Ascending aorta (tissue), 2 donors: ENCODE measurements at regions of chr10 and their contacts with region 1.

Region 1: GRCh38 chr10:127919418-127920271 is 12.7 kb downstream of the PTPRE start:
- DNase-seq: peak in 1 of 2 donors; percentile 68
- H3K4me3 ChIP-seq: no peak overlapping the region
- H3K27ac ChIP-seq: peak overlapping the region; percentile 90 to 92
- H3K4me1 ChIP-seq: peaks cover 6 to 37% of the 10 kb centered on the region in 2 donors
- H3K27me3 ChIP-seq: no peaks in the 10 kb centered on the region
- CTCF ChIP-seq: peak; percentile 3 to 35 (median 26)

Region 2: DNA sequence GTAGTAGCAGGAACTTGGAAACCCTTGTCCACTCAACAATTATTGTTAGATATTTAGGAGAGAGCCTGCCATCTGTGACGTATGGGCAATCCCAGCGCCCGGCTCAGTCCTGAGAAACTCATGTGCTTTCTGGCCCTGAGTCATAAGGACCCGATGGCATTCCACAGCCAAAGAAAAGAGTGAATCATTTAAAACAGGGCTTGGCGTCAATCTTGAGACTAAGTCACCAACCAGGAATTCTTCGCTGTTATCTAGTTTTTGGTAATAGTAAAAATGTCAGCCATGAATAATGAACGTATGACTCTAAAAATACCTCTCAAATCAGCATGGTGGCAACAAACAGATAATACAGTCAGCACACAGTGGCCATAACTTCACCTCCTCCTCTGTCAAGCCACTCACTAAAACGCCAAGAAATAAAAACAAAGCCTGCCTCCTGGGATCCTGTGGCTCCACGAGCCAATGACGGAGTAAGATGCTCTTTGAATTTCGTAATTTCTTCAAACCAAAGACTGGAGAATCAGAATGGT is 1672.1 kb before region 1 on chr10:
- intact Hi-C with region 1: loop called (anchors 5 kb)
- DNase-seq: peak; percentile 74 to 97
- H3K4me3 ChIP-seq: peak overlapping the region in 1 of 2 donors; percentile 16
- H3K27ac ChIP-seq: peak overlapping the region; percentile 69 to 79
- H3K4me1 ChIP-seq: peaks cover 0 to 12% of the 10 kb centered on the region in 2 donors
- H3K27me3 ChIP-seq: no peaks in the 10 kb centered on the region
- CTCF ChIP-seq: no peak

Region 3: GRCh38 chr10:127906548-127907377 is 12.9 kb before region 1 on chr10 and contains the start of gene PTPRE:
- intact Hi-C with region 1: loop called (anchors 1 kb)
- DNase-seq: peak in 1 of 2 donors; percentile 83
- H3K4me3 ChIP-seq: peak within 1 kb of the TSS; percentile 67 to 88
- H3K27ac ChIP-seq: peak within 1 kb of the TSS; percentile 72 to 91
- H3K4me1 ChIP-seq: peaks cover 0 to 11% of the 10 kb centered on the region in 2 donors
- H3K27me3 ChIP-seq: no peaks in the 10 kb centered on the region
- CTCF ChIP-seq: peak; percentile 56 to 97 (median 62)
- total RNA-seq, gene PTPRE: 14.5 TPM

Region 4: DNA sequence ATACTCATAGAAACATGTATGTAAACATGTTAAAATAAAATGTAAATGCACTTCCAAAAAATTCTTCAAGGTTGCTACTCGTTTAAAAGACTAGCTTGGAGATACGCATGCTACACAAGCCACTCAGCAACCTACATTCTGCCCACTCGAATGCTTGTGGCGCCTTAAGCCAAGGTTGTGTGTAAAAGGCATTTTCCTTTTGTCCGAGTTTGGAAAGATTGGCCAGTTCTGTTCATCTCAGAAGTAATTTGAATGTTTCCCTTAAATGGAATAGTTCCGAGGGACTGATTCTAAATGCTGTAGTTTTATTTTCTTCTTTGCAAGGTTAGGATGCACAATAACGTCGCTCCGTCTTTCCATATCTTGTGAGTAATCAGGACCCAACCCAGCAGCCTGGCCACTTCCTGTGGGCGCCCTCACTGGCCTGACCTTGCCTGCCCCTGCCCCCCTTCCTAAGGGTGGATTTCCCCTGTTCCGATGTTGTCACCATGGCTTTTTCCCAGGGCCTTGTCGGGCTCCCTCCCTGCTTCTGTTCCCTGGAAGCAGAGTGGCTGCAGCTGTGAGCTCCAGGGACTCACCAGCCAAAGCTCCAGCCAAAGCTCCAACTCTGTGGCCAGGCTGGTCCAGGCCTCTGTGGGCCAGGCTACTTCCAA is 57.8 kb after region 1 on chr10:
- intact Hi-C with region 1: loop called (anchors 5 kb)
- DNase-seq: peak; percentile 54 to 91
- H3K4me3 ChIP-seq: peak overlapping the region; percentile 41 to 53
- H3K27ac ChIP-seq: peak overlapping the region; percentile 74 to 75
- H3K4me1 ChIP-seq: peaks cover 7 to 17% of the 10 kb centered on the region in 2 donors
- H3K27me3 ChIP-seq: no peaks in the 10 kb centered on the region
- CTCF ChIP-seq: no peak

Region 5: DNA sequence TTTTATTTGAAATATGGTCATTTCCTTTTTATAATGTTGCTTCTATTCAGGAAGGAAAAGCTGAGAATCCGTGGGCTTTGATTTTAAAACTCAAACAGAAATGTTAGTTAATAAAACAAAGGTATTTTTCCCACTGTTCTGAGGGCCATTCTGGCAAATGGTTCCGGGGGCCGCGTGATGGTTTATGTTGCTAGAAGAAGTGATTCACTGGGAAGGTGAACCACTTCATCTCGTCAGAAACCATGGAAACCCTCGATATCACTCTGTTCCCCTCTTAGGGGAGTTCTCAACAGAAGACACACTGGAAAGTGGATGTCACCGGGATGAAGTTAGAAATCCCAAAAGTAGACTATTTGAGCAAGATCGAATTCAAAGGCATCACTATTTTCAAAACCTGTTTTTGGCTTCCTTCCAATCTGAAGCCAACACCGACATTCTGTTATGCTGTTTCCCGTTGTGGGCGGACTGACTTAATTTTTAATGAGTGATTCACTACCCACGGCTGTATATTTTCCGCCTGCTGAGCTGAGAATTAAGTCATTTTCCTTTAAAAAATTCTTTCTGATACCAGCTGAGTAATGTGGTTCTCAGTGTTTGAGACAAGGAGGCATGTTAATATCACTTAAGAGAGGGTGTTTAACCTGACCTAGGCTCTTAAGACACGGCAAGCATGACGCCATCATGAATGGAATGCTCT is 71.3 kb after region 1 on chr10:
- intact Hi-C with region 1: loop called (anchors 5 kb)
- DNase-seq: peak in 1 of 2 donors; percentile 65
- H3K4me3 ChIP-seq: no peak overlapping the region
- H3K27ac ChIP-seq: peak overlapping the region; percentile 67 to 71
- H3K4me1 ChIP-seq: peaks cover 8 to 21% of the 10 kb centered on the region in 2 donors
- H3K27me3 ChIP-seq: no peaks in the 10 kb centered on the region
- CTCF ChIP-seq: no peak

Region 6: GRCh38 chr10:128011175-128011979 is 91.7 kb after region 1 on chr10:
- intact Hi-C with region 1: loop called (anchors 5 kb)
- DNase-seq: peak; percentile 23 to 87
- H3K4me3 ChIP-seq: no peak overlapping the region
- H3K27ac ChIP-seq: no peak overlapping the region
- H3K4me1 ChIP-seq: no peaks in the 10 kb centered on the region
- H3K27me3 ChIP-seq: no peaks in the 10 kb centered on the region
- CTCF ChIP-seq: peak; percentile 98 to 99 (median 99)

Region 7: DNA sequence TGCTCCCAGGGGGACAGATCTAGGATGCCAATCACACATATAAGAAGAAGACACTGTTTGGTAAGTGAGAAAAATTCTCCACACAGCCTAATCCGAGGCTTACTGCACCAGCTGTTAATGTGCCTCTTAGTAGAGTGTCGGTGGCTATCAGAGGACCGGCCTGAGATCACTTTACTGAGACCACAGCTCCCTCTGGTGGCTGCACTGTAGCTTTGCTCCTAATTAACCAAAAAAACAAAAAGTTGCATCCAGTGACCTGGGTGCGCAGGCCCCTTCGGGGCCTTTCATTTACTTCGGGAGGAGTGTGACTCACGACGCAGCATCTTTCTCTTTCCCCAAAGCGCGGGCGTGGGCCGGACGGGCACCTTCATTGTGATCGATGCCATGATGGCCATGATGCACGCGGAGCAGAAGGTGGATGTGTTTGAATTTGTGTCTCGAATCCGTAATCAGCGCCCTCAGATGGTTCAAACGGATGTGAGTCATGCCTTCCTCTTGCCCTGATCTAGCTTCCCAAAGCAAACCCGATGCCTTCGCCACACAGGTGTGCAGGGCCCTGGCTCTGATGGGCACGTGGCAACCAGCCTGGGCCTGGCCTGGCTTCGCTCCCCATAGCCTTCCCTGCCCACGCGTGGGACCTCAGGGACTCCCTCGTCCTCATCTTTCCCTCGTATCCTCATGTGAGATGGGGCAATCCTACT is 149.9 kb after region 1 on chr10:
- intact Hi-C with region 1: loop called (anchors 5 kb)
- DNase-seq: peak in 1 of 2 donors; percentile 80
- H3K4me3 ChIP-seq: no peak overlapping the region
- H3K27ac ChIP-seq: no peak overlapping the region
- H3K4me1 ChIP-seq: peaks cover 4 to 7% of the 10 kb centered on the region in 2 donors
- H3K27me3 ChIP-seq: no peaks in the 10 kb centered on the region
- CTCF ChIP-seq: peak; percentile 77 to 84 (median 84)